ENCODE measurements at regions of chr22 and their contacts with region 1.

Region 1: DNA sequence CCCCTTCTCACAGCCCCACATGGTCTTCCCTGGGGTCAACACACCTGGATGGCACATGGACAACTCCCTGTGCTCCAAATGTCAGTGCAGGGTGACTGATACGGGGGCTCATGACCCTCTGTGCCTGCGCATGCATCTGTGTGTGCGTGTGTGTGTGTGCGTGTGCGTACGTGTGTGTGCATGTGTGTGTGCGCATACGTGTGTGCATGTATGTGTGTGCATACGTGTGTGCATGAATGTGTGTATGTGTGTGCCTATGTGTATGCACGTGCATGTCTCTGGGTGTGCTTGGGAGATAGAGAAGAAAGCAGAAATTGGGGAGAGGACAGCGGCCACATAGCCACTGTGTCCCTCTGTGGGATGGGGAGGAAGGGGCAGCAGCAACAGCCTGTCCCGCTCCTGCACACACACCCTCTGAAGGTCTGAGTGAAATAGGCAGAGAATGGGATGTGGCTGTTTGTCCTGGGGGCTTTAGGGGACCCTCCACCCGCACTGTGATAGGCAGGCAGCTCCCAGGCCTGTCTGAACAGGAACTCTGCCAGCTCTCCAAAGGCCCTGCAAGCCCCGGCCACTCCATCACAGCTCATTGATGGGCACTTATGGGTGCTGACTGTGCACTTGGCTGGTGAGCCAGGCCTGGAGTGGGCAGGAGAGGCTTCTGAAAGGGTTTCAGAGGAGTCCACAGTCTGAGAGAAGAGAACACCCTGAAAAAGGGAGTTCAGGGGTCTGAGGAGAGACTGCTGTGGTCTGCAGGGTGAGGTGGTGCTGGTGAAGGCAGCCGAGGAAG is 28.7 kb upstream of the PICK1 start:
- DNase-seq: no peak
- ATAC-seq: no peak
- H3K4me3 ChIP-seq: no peak overlapping the region
- H3K4me3 Mint-ChIP-seq: no peak overlapping the region
- H3K27ac ChIP-seq: no peak overlapping the region
- H3K27ac Mint-ChIP-seq: no peak overlapping the region
- H3K4me1 ChIP-seq: peaks cover 0 to 5% of the 10 kb centered on the region in 2 experiments
- H3K4me1 Mint-ChIP-seq: no peaks in the 10 kb centered on the region
- H3K27me3 ChIP-seq: peaks cover 0 to 8% of the 10 kb centered on the region in 2 experiments
- H3K27me3 Mint-ChIP-seq: no peaks in the 10 kb centered on the region

Region 2: GRCh38 chr22:37925767-37926166 is 102.8 kb before region 1 on chr22:
- CTCF ChIA-PET with region 1: interaction called in 1 of 2 experiments, 13 read pairs
- POLR2A ChIA-PET with region 1: no interaction called
- DNase-seq: no peak
- ATAC-seq: no peak
- H3K4me3 ChIP-seq: no peak overlapping the region
- H3K4me3 Mint-ChIP-seq: no peak overlapping the region
- H3K27ac ChIP-seq: no peak overlapping the region
- H3K27ac Mint-ChIP-seq: no peak overlapping the region
- H3K4me1 ChIP-seq: no peaks in the 10 kb centered on the region
- H3K4me1 Mint-ChIP-seq: peaks cover 0 to 2% (median 0%) of the 10 kb centered on the region in 3 donors
- H3K27me3 ChIP-seq: no peaks in the 10 kb centered on the region
- H3K27me3 Mint-ChIP-seq: no peaks in the 10 kb centered on the region

Region 3: DNA sequence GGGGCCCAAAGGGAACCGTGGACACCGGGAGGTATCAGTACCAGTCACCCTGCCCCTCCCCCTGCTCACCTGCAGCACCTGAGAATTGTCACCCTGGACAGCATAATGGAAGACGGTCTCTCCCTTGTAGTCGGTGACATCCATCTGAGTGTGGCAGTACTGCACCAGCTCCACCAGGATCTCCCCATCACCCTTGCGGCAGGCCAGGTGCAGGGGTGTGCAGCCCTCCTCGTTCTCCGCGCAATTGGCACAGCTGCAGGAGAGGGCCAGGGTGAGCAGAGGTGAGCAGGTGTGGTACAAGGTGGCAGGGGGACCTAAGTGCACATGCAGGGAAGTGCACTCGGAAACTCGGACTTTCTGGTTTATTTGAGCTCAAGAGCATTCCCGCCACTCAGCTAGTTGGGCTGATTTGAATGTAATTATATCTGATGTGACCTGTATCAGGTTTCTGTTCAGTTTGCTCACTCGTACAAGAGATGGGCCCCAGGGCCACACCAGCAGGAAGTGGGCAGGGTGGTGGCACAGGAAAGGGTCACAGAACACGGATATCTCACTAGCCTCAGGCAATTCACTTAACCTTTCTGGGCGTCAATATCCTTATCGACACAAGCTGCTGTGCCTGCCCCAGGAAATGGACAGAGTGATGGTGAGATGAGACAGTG is 114.6 kb after region 1 on chr22:
- CTCF ChIA-PET with region 1: no interaction called
- POLR2A ChIA-PET with region 1: no interaction called
- DNase-seq: peak in 20 of 35 experiments; percentile 12 to 51 (median 24)
- ATAC-seq: peak in 3 of 4 experiments; percentile 32 to 40 (median 36)
- H3K4me3 ChIP-seq: no peak overlapping the region
- H3K4me3 Mint-ChIP-seq: no peak overlapping the region
- H3K27ac ChIP-seq: no peak overlapping the region
- H3K27ac Mint-ChIP-seq: peak overlapping the region; percentile 48 to 58
- H3K4me1 ChIP-seq: peaks cover 0 to 23% of the 10 kb centered on the region in 2 experiments
- H3K4me1 Mint-ChIP-seq: peaks cover 14 to 19% (median 18%) of the 10 kb centered on the region in 3 donors
- H3K27me3 ChIP-seq: no peaks in the 10 kb centered on the region
- H3K27me3 Mint-ChIP-seq: no peaks in the 10 kb centered on the region